ENCODE measurements at regions of chr9 and their contacts with region 1.

Region 1: GRCh38 chr9:136769710-136770191 is 5.4 kb upstream of the LCN15 start:
- DNase-seq: peak; percentile 82
- ATAC-seq: peak; percentile 78
- H3K4me3 Mint-ChIP-seq: peak overlapping the region; percentile 47
- H3K27ac Mint-ChIP-seq: no peak overlapping the region
- H3K4me1 Mint-ChIP-seq: peaks cover 5% of the 10 kb centered on the region; the same call in 1 of the 2 replicates
- H3K27me3 Mint-ChIP-seq: peaks cover 14% of the 10 kb centered on the region
- CTCF ChIP-seq: peak; percentile 51

Region 2: GRCh38 chr9:136631038-136632000 is 138.4 kb before region 1 on chr9:
- CTCF ChIA-PET with region 1: no interaction called
- POLR2A ChIA-PET with region 1: no interaction called
- DNase-seq: peak; percentile 78
- ATAC-seq: peak; percentile 57
- H3K4me3 Mint-ChIP-seq: no peak overlapping the region
- H3K27ac Mint-ChIP-seq: no peak overlapping the region
- H3K4me1 Mint-ChIP-seq: no peaks in the 10 kb centered on the region
- H3K27me3 Mint-ChIP-seq: no peaks in the 10 kb centered on the region
- CTCF ChIP-seq: 0 out of 2 replicates have a peak, but pooled peaks have one; percentile 51

Region 3: DNA sequence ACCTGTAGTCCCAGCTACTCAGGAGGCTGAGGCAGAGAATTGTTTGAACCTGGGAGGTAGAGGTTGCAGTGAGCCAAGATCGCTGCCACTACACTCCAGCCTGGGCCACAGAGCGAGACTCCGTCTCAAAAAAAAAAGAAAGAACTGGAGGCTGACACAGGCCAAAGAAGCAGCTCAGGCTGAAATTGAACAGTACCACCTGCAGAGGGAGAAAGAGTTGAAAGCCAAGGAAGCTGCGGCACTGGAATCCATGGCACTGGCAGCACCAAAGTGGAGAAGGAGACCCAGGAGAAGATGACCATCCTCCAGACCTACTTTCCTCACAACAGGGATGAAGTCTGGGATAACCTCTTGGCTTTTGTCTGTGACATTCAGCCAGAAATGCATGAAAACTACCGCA is 10.1 kb after region 1 on chr9:
- CTCF ChIA-PET with region 1: interaction called, 22 read pairs
- POLR2A ChIA-PET with region 1: no interaction called
- DNase-seq: no peak
- ATAC-seq: no peak
- H3K4me3 Mint-ChIP-seq: no peak overlapping the region
- H3K27ac Mint-ChIP-seq: no peak overlapping the region
- H3K4me1 Mint-ChIP-seq: no peaks in the 10 kb centered on the region
- H3K27me3 Mint-ChIP-seq: peaks cover 53% of the 10 kb centered on the region
- CTCF ChIP-seq: no peak

Region 4: DNA sequence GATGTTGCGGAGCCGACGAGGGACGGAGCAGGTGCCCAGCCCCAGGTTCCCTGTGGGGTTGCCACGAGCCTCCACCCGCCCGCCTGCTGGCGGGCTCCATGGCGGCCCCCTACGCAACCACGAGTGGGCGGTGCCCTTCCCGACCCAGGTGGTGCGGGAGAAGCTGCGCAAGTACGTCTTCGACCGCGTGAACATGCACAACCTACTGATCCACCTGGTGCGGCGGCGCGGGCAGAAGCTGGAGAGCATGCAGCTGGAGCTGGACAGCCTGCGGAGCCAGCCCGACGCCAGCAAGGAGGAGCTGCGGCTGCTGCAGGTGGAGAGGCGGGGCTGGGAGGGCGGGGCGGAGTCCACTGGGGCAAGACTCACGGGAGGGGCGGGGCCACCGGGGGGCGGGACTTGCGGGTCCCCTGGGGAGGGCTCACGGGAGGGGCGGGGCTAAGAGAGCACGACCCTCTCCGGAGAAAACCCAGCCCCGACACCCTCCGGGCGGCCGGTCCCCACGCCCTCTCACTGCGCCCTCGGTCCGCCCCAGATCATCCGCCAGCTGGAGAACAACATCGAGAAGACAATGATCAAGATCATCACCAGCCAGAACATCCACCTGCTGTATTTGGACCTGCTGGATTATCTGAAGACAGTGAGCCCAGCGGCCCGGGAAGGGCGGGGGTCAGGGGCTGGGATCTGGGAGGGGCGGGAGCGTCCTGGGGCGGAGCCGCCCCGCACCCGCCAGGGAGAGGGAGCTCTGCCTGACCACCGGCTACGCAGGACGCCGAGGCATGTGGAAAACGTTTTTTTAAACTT is 30.3 kb after region 1 on chr9:
- CTCF ChIA-PET with region 1: interaction called, 10 read pairs
- POLR2A ChIA-PET with region 1: no interaction called
- DNase-seq: peak; percentile 92
- ATAC-seq: peak; percentile 54
- H3K4me3 Mint-ChIP-seq: peak overlapping the region; percentile 90
- H3K27ac Mint-ChIP-seq: peak overlapping the region; percentile 97
- H3K4me1 Mint-ChIP-seq: peaks cover 17% of the 10 kb centered on the region
- H3K27me3 Mint-ChIP-seq: peaks cover 58% of the 10 kb centered on the region
- CTCF ChIP-seq: no peak